Activated CD8-positive, alpha-beta T cell treated with anti-CD3 and anti-CD28 coated beads, Interleukin-2, amount 10 ng/mL, durations not matched to agents 7 days and 5 days (primary cell): ENCODE measurements at regions of chr12 and their contacts with region 1.

Region 1: DNA sequence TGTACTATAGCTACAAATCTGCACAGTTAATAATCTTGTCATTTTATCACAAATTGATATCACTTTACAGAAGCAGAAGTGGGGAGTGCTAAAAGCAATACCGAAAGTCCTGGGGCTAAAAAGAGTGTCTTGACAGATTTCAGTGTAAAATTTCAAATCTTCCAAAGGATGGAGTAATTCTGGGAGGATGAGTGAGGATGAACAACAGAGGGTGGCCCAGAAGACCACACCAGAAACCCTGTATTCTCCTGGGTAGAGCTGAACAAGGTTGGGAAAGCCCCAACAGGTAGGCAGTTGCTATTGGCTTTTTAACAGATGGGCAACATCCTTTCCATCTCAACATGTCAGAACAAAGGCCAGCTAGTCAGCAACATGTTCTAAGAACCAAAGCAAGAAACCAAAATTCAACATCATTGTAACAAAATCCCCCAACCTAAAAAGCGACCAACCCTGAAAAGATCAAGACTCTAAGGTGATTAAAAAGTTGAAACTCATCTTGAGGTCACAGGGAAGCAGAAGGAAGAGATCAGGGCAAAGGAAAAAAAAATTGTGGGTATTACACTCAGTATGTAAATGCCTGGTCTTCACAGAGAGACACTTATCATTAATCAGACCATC is 38.8 kb downstream of the CBX5 start:
- DNase-seq: no peak
- ATAC-seq: no peak
- H3K4me3 Mint-ChIP-seq: no peak overlapping the region
- H3K27ac Mint-ChIP-seq: peak overlapping the region; percentile 54
- H3K4me1 Mint-ChIP-seq: peaks cover 17% of the 10 kb centered on the region
- H3K27me3 Mint-ChIP-seq: no peaks in the 10 kb centered on the region

Region 2: DNA sequence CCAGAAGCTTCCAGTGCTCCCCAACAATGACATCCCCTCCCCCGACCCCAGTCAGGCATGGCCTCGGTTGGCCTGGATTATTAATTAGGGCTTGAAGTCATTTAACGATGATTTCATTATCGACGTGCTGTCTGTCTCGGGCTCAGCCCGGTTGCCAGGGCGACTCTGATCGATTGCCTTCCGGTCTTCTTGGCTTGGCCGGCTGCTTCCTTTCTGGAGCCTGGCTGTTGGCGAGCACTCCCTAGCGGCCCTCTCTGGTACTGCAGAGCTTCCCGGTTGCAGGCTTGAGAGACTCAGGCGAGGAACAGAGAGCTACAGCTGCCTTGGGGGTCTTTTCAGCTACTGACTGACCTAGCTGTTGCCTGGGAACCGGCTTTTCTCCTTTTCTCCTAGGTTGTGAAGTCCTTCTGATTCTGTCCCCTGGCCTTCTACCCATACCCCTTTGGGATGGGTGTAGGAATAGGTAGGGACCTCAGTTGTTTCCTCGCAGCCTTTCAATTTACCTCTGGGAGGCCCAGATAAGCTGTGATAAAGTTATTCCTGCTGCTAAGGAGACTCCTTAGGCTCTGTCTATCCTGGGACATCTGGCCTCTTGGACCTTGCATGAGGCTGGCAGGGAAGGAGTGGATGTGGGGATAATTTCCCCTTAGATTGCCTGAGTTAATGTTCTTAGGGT is 483.8 kb before region 1 on chr12:
- CTCF ChIA-PET with region 1: no interaction called
- POLR2A ChIA-PET with region 1: no interaction called
- DNase-seq: peak; percentile 91
- ATAC-seq: peak; percentile 83
- H3K4me3 Mint-ChIP-seq: peak overlapping the region; percentile 42
- H3K27ac Mint-ChIP-seq: peak overlapping the region; percentile 51
- H3K4me1 Mint-ChIP-seq: peaks cover 5% of the 10 kb centered on the region
- H3K27me3 Mint-ChIP-seq: peaks cover 36% of the 10 kb centered on the region

Region 3: DNA sequence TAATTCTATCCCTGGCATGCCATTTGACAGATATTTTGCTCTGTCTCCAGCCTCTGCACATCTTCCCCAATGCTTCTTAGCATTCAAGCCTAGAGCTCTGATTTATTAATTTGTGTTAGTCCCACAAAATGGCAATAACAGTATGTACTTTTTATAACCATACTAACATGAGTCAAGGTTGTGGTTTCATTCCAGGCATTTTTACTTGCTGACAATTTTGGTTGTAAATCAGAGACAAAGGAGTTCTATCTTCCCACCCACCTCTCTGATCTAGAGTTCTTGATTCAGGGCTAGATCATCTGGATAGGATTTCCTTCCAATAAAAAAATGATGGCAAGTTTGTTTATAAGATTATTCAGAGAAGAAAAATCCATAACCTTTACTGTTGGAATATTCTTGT is 470.8 kb before region 1 on chr12:
- CTCF ChIA-PET with region 1: no interaction called
- POLR2A ChIA-PET with region 1: no interaction called
- DNase-seq: no peak
- ATAC-seq: no peak
- H3K4me3 Mint-ChIP-seq: no peak overlapping the region
- H3K27ac Mint-ChIP-seq: no peak overlapping the region
- H3K4me1 Mint-ChIP-seq: no peaks in the 10 kb centered on the region
- H3K27me3 Mint-ChIP-seq: peaks cover 60% of the 10 kb centered on the region

Region 4: DNA sequence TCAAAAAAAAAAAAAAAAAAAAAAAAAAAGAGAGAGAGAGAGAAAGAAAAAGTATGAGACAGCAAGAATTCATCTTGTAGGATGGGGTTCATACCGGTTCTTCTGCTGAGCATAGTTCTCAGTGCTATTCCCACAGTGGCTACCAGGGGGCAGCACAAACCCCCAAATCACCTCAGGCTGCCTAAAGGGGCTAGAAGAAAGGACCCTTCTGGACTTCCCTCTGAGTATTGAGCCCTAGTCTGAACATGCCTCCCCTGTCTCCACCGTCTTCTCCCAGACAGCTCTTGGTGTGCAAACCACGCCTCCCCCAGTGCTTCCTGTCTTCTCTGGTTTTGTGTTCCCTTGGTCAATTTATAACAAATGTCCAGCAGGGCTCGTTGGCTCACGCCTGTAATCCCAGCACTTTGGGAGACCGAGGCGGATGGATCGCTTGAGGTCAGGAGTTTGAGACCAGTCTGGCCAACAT is 21.0 kb before region 1 on chr12:
- CTCF ChIA-PET with region 1: interaction called, 11 read pairs
- POLR2A ChIA-PET with region 1: no interaction called
- DNase-seq: peak; percentile 78
- ATAC-seq: peak; percentile 45
- H3K4me3 Mint-ChIP-seq: no peak overlapping the region
- H3K27ac Mint-ChIP-seq: no peak overlapping the region
- H3K4me1 Mint-ChIP-seq: peaks cover 31% of the 10 kb centered on the region
- H3K27me3 Mint-ChIP-seq: peaks cover 18% of the 10 kb centered on the region

Region 5: DNA sequence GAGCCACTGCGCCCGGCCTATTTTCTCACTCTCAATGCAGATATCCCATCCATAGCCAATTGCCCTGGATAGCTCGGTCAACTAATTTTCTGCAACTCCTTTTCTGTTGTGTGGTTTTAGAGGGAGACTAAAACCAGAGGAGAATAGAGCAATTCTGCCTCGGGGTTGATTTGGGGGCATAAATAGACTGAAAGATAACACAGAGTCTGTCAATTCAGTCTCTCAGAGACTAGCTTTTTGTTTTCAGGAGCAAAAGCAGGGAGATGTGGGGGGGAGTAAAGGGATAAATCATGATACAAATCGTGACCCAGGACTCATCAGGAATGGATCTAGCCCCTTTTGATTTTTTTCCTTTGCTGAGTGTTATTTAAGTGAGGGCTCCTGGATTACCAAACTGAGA is 90.4 kb after region 1 on chr12:
- CTCF ChIA-PET with region 1: no interaction called
- POLR2A ChIA-PET with region 1: no interaction called
- DNase-seq: no peak
- ATAC-seq: no peak
- H3K4me3 Mint-ChIP-seq: no peak overlapping the region
- H3K27ac Mint-ChIP-seq: peak overlapping the region; percentile 82
- H3K4me1 Mint-ChIP-seq: peaks cover 49% of the 10 kb centered on the region
- H3K27me3 Mint-ChIP-seq: no peaks in the 10 kb centered on the region

Region 6: GRCh38 chr12:54431911-54432814 is 191.1 kb after region 1 on chr12:
- CTCF ChIA-PET with region 1: no interaction called
- POLR2A ChIA-PET with region 1: no interaction called
- DNase-seq: peak; percentile 58
- ATAC-seq: peak; percentile 57
- H3K4me3 Mint-ChIP-seq: peak overlapping the region; percentile 51
- H3K27ac Mint-ChIP-seq: peak overlapping the region; percentile 70
- H3K4me1 Mint-ChIP-seq: peaks cover 47% of the 10 kb centered on the region
- H3K27me3 Mint-ChIP-seq: peaks cover 18% of the 10 kb centered on the region